Aorta (tissue), 5 donors: ENCODE measurements at regions of chr20 and their contacts with region 1.

Region 1: DNA sequence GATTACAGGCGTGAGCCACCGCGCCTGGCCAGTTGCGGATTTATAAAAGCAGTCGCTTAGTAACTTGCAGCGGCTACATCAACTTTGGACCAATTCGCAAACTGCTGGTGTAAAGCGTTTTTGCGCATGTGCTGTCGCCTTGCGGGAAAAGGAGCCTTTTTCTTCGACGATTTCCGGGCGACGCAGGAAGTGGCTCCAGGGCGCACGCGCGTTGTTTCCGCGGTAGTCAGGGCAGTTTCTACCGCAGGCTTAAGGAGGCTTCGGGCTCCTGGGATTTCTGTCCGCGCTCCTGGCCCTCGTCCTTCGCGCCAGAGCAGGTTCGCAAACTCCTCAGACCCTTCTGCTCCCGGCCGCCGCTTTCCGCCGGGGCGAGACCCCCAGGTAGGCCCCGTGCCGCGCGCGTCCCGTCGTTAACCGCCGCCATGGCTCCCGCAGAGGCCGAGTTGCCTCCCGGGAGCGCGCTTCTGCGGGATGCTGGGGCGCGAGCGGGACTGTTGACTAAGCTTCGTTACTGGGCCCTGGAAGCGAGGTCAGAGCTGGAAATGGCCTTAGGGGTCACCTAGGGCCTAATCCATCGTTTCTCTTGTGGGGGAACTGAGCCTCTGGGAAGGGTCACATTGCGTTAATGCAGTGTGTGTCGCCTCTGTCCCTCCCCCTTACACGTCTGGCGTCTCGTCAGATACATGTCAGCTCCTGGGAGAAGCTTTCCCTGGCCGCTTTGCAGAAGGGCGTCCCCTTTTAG is at the start of gene RAE1:
- DNase-seq: peak; percentile 94 to 97
- ATAC-seq: peak; percentile 93
- H3K4me3 ChIP-seq: peak within 1 kb of the TSS; percentile 31 to 59
- H3K27ac ChIP-seq: peak within 1 kb of the TSS in 1 of 2 donors; percentile 49
- H3K4me1 ChIP-seq: no peaks in the 10 kb centered on the region
- H3K27me3 ChIP-seq: no peaks in the 10 kb centered on the region
- total RNA-seq, gene RAE1: 11.6 to 19.4 TPM

Region 2: DNA sequence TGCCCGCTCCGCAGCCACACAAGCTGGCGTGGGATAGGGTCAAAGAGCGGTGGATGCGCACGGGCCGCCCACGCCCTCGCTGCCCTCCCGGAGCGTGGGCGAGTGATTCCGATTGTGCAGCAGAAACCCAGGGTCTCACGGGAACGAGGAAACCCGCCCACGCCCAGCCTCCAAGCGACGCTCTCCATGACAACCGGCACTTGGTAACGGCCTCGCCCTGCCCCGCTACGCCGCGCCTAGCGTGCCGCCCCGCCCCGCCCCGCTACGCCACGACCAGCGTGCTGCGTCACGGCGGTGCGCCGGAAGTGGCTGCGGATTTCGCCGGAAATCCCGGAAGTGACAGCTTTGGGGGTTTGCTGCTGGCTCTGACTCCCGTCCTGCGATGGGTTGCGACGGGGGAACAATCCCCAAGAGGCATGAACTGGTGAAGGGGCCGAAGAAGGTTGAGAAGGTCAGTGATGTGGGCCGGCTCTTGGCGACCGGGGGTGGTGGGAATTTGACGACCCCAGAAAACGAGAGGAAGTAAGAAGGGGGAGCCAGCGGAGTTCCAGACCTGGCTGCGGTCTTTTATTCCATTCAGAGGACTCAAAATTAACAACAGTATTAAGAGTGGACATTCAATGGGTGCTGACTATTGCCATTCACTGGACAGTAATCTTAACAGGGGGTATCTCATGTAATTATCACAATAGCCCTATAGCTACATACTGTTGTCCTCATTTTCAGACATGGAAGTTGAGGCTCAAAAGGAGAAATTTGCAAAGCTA is 882.7 kb before region 1 on chr20 and contains the start of gene RTF2:
- intact Hi-C with region 1: loop called in 1 of 2 experiments (anchors 5 kb)
- DNase-seq: peak; percentile 96 to 98
- ATAC-seq: peak; percentile 99
- H3K4me3 ChIP-seq: peak within 1 kb of the TSS; percentile 88 to 91
- H3K27ac ChIP-seq: peak within 1 kb of the TSS in 1 of 2 donors; percentile 46
- H3K4me1 ChIP-seq: peaks cover 2 to 11% of the 10 kb centered on the region in 2 donors
- H3K27me3 ChIP-seq: no peaks in the 10 kb centered on the region
- total RNA-seq, gene RTF2: 68.1 to 72.6 TPM

Region 3: DNA sequence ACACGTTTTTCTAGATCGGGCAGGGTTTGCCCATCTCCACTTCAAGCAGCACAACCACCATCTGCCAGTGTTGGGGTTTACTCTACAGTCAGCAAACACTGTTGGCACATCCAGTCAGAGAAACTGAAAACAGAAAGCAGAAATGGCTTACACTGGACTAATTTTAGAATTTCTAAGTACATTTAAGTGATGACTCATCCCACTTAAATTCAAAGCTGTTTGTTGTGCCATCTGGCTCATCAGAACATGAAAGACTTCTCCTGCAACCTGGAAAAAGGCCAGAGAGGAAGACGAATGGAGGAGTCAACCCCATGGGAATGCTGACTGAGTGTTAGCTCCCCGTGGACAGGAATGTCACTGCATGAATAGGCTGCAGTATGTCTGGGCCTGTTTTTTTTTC is 796.3 kb before region 1 on chr20:
- intact Hi-C with region 1: loop called (anchors 2 to 5 kb)
- DNase-seq: no peak
- ATAC-seq: peak; percentile 54
- H3K4me3 ChIP-seq: no peak overlapping the region
- H3K27ac ChIP-seq: no peak overlapping the region
- H3K4me1 ChIP-seq: no peaks in the 10 kb centered on the region
- H3K27me3 ChIP-seq: no peaks in the 10 kb centered on the region

Region 4: GRCh38 chr20:57091801-57092584 is 259.2 kb before region 1 on chr20:
- intact Hi-C with region 1: loop called in 1 of 2 experiments (anchors 2 kb)
- DNase-seq: peak in 1 of 2 donors; percentile 83
- ATAC-seq: no peak
- H3K4me3 ChIP-seq: no peak overlapping the region
- H3K27ac ChIP-seq: no peak overlapping the region
- H3K4me1 ChIP-seq: no peaks in the 10 kb centered on the region
- H3K27me3 ChIP-seq: no peaks in the 10 kb centered on the region

Region 5: DNA sequence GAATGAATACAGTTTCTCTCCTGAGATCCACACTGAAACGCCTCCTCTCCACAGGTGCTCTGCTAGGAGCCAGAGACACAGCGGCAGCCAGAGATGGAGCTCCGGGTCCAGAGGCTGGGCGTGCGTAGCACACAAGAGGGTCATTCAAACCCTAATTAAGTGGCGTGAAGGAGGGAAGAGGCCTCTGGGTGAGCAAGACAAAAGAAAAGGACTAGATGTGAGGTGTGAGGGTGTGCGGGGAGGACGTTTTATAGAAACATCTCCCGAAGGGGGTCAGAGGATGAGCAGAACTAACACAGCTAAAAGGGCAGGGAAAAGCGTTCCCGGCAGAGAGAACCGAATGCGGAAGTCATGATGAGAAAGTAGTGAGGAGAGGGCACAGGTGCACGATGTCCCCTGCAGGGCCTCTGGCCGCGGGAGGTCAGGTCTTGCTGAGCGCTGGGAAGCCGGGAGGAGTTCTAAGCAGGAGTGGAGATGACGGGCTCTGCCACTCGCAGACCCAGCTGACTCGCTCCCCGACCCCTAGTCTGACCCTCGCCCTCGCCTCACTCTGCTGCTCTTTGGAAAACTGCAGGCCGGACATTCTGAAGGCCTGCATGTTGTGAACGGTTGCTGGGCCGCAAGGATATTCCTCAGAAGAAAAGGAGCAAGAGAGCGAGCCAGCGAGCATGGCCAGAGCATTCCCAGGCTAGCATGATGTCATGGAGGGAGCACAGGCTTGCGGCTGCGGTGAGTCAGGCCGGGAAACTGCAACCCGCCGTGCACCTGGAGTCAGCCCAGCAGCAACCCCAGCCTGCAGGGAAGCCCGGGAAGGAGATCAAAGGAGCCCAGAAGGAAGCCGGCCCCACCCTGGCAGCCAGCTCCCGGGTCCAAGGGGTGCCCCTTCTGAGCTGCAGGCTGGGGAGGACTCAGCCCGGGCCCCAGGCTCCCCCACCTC is 139.0 kb before region 1 on chr20:
- intact Hi-C with region 1: loop called in 1 of 2 experiments (anchors 10 kb)
- DNase-seq: peak; percentile 85 to 87
- ATAC-seq: peak; percentile 86
- H3K4me3 ChIP-seq: no peak overlapping the region
- H3K27ac ChIP-seq: no peak overlapping the region
- H3K4me1 ChIP-seq: no peaks in the 10 kb centered on the region
- H3K27me3 ChIP-seq: no peaks in the 10 kb centered on the region